ENCODE measurements at regions of chr6 and their contacts with region 1.

Region 1: DNA sequence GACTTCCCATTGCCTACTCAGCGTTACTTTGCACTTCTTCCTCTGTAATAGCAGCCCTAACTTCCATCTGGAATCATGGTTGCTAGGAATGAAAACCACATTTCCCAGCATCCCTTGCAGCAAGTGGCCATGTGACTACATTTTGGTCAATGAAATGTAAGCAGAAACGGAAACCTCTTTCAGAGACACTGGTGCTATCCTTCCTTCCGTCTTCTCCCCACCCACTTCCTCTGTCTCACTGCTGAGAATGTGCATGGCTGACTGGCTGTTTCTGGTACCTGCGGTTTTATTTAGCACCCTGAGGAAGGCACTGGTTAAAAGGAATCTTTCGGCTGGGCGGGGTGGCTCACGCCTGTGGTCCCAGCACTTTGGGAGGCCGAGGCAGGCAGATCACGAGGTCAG is 107.4 kb downstream of the SCML4 start:
- DNase-seq: peak; percentile 84
- ATAC-seq: peak; percentile 62
- H3K4me3 Mint-ChIP-seq: peak overlapping the region; percentile 53
- H3K27ac Mint-ChIP-seq: peak overlapping the region; percentile 90
- H3K4me1 Mint-ChIP-seq: peaks cover 72% of the 10 kb centered on the region
- H3K27me3 Mint-ChIP-seq: no peaks in the 10 kb centered on the region

Region 2: DNA sequence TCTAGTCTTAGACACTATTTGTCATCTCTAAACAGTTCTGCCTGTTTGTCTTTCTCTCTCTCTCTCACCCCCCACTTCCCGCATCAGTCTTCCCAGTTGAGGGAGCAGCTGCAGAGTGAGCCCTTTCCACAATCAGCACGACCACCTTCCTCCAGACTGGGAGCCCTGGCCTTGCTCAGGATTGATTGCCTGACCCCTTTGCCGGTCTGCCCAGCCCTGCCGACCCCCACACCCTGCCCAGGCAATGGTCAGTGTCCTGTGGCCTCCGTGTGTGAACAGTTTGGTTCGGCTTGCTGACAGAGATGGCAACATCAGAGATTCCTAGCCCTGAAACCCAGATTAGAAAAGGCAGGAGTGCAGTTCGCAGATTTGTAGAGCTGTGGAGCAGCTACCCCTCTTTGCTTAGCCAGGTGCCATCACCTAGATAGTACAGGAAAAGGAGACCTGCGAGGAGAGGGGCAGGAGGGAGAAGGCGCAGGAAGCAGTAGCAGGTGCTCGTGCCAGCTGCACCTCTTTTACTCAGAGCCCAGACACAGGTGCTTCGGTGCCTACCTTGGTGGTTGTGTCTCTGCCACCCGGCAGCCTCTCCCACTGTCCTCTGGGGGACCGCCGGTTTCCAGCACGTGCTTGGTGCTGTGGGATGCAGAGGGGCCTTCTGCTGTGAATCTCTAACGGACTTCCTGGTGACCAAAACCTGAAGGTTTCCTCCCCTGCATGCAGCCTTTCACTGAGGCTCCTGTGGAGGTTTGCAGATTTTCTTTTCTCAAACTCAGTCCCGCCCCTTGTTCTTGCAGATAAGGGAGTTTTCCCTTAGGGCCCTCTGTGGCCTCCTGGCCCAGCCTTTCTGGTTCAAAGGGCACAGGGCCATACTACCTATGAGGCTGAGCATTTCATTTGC is 15.0 kb after region 1 on chr6:
- CTCF ChIA-PET with region 1: interaction called, 16 read pairs
- POLR2A ChIA-PET with region 1: interaction called, 9 read pairs
- intact Hi-C with region 1: loop called (anchors 1 kb)
- DNase-seq: peak; percentile 46
- ATAC-seq: peak; percentile 20
- H3K4me3 Mint-ChIP-seq: peak overlapping the region; percentile 79
- H3K27ac Mint-ChIP-seq: peak overlapping the region; percentile 91
- H3K4me1 Mint-ChIP-seq: peaks cover 82% of the 10 kb centered on the region
- H3K27me3 Mint-ChIP-seq: no peaks in the 10 kb centered on the region

Region 3: DNA sequence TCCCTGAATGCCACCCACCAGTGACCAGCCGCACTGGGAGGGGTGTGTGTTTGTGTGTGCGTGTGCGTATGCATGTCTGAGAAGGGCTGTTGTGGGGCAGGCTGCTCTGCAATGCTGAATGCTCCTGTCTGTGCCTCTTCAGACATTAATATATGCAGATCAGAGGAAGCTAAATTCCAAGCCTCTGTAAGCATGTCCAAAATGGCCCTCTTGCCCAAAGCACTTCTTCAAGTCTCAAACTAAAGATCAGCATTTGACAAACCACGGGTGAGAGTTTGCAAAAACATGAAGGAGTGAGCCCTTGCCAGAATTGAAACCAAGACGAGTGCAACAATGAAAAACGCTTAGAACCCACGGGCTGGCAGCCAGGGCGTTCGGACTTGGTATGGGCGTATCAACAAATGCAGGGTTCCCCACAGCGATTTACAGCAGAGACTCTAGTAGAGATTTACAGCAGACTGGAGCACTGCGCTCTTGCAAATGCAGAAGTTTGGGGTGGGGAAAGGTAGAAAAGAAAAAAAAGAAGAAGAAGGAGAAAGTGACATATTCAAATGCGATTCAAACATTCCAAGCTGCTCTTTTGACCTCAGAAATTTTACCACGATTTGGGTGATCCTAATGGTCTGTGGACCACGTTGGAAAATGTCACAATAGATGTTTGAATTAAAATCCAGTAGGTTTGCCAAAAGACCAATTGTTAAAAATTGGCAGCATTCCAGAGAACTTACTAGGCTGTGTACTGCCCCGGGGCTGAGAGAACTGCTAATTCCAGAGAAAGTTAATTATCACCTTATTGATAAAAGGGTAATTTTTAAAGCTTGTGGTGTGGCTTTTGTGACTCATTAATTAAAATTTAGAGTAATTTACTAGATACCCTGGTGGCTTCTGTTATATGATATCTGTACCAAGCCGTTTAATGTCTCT is 103.9 kb after region 1 on chr6:
- CTCF ChIA-PET with region 1: interaction called, 19 read pairs
- POLR2A ChIA-PET with region 1: interaction called, 30 read pairs
- intact Hi-C with region 1: loop called (anchors 1 to 2 kb)
- DNase-seq: peak; percentile 60
- ATAC-seq: no peak
- H3K4me3 Mint-ChIP-seq: peak overlapping the region; percentile 87
- H3K27ac Mint-ChIP-seq: peak overlapping the region; percentile 98
- H3K4me1 Mint-ChIP-seq: peaks cover 84% of the 10 kb centered on the region
- H3K27me3 Mint-ChIP-seq: no peaks in the 10 kb centered on the region

Region 4: GRCh38 chr6:107964671-107965340 is 248.1 kb after region 1 on chr6:
- CTCF ChIA-PET with region 1: no interaction called
- POLR2A ChIA-PET with region 1: no interaction called
- intact Hi-C with region 1: loop called in 1 of 2 experiments (anchors 1 kb)
- DNase-seq: peak; percentile 90
- ATAC-seq: peak; percentile 96
- H3K4me3 Mint-ChIP-seq: no peak overlapping the region
- H3K27ac Mint-ChIP-seq: peak overlapping the region; percentile 88
- H3K4me1 Mint-ChIP-seq: peaks cover 25% of the 10 kb centered on the region
- H3K27me3 Mint-ChIP-seq: peaks cover 2% of the 10 kb centered on the region

Region 5: GRCh38 chr6:108883172-108883571 is 1166.5 kb after region 1 on chr6:
- CTCF ChIA-PET with region 1: no interaction called
- POLR2A ChIA-PET with region 1: no interaction called
- intact Hi-C with region 1: loop called in 1 of 2 experiments (anchors 1 kb)
- DNase-seq: no peak
- ATAC-seq: peak; percentile 93
- H3K4me3 Mint-ChIP-seq: no peak overlapping the region
- H3K27ac Mint-ChIP-seq: peak overlapping the region; percentile 60
- H3K4me1 Mint-ChIP-seq: peaks cover 34% of the 10 kb centered on the region
- H3K27me3 Mint-ChIP-seq: peaks cover 16% of the 10 kb centered on the region

Measured in activated CD4-positive, alpha-beta T cell treated with anti-CD3 and anti-CD28 coated beads for 36 hours (primary cell).